ENCODE measurements at regions of chr5 and their contacts with region 1.

Region 1: GRCh38 chr5:144203750-144204596 is 33.3 kb downstream of the KCTD16 start:
- DNase-seq: peak; percentile 49
- H3K4me3 Mint-ChIP-seq: no peak overlapping the region
- H3K27ac Mint-ChIP-seq: no peak overlapping the region
- H3K4me1 Mint-ChIP-seq: peaks cover 4% of the 10 kb centered on the region
- H3K27me3 Mint-ChIP-seq: peaks cover 31% of the 10 kb centered on the region

Region 2: DNA sequence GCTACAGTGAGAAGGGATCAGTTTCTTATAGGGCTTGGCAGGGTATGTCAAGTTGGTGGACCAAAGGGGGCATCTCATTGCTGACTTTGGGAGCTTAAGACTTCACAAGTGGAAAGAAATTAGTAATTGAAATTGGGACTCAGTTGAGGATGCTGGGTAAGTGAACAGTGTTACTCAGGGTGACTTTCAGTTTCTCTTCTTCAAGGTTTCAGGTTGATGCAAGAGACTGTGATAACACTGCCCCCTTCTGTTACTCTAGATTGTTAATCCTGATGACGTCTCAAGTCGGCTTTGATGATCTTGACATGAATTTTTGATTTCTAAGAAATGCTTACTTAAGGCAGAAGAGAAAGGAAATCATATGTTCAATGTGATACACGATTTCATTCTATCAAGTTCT is 12.0 kb before region 1 on chr5:
- CTCF ChIA-PET with region 1: interaction called, 15 read pairs
- DNase-seq: peak; percentile 29
- H3K4me3 Mint-ChIP-seq: no peak overlapping the region
- H3K27ac Mint-ChIP-seq: no peak overlapping the region
- H3K4me1 Mint-ChIP-seq: no peaks in the 10 kb centered on the region
- H3K27me3 Mint-ChIP-seq: peaks cover 3% of the 10 kb centered on the region

Region 3: GRCh38 chr5:144267961-144268513 is 64.1 kb after region 1 on chr5:
- CTCF ChIA-PET with region 1: no interaction called
- DNase-seq: no peak
- H3K4me3 Mint-ChIP-seq: no peak overlapping the region
- H3K27ac Mint-ChIP-seq: no peak overlapping the region
- H3K4me1 Mint-ChIP-seq: no peaks in the 10 kb centered on the region
- H3K27me3 Mint-ChIP-seq: no peaks in the 10 kb centered on the region

Region 4: DNA sequence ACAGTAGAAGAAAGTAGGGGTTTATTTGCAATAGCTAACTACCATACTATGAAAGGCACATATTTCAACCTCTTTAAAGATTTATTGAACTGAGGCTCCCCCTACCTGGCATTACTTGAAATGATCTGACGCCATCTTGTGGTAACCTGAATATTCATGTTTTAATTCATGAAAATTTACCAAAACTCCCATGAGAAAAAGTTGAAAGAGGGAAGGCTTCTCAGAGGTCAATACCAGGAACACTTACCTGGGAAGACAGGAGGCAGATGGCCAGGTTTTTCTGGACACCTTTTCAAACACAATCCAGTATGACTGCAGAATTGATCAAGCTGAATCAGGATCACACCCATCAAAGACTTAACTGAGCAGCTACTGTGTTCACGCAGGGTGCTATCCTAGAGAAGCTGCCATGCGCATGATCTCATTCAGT is 1621.8 kb after region 1 on chr5:
- CTCF ChIA-PET with region 1: interaction called, 19 read pairs
- DNase-seq: no peak
- H3K4me3 Mint-ChIP-seq: no peak overlapping the region
- H3K27ac Mint-ChIP-seq: no peak overlapping the region
- H3K4me1 Mint-ChIP-seq: no peaks in the 10 kb centered on the region
- H3K27me3 Mint-ChIP-seq: no peaks in the 10 kb centered on the region

Measured in activated naive CD4-positive, alpha-beta T cell treated with anti-CD3 and anti-CD28 coated beads, Interleukin-2, amount 10 ng/mL, durations not matched to agents 7 days and 5 days (primary cell).